Activated CD4-positive, alpha-beta T cell treated with anti-CD3 and anti-CD28 coated beads, Interleukin-2, amount 10 ng/mL, durations not matched to agents 24 days and 14 days (primary cell): ENCODE measurements at regions of chr2 and their contacts with region 1.

Region 1: DNA sequence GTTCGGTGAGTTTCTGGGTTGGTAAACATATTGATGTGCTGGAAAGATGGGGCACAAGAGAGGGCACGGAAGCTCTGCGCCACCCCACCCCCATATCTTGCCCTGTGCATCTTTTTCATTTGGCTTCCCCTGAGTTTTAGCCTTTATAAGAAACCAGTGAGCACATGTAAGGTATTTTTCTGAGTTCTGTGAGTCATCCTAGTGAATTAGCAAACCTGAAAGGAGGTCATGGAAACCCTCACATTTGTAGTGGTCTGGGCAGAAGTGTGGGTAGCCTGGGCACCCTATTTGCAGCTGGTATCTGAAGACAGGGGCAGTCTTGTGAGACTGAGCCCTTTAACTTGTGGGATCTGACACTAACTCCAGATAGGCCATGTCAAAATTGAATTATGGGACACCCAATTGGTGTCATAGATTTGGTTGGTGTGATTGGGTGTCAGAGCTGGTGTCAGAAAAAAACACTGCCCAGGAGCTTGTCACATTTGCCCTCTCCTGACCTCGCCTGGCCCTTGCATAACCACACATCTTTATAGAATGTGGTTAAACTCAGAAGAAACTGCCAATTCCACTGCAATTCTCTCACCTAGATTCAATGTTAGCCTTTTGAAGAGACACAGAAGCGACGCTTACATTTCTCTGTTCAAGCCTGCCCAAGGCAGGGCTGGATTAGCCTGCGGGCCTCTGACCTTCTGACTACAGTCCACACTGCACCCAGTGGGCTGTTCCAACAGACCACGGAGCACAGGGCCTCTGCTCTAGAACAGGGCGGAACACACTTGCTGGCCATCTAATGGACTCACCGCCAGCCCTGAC is 12.0 kb upstream of the GALM start:
- DNase-seq: peak; percentile 82
- H3K4me3 Mint-ChIP-seq: peak overlapping the region; percentile 63
- H3K27ac Mint-ChIP-seq: peak overlapping the region; percentile 87
- H3K4me1 Mint-ChIP-seq: peaks cover 58% of the 10 kb centered on the region
- H3K27me3 Mint-ChIP-seq: no peaks in the 10 kb centered on the region

Region 2: DNA sequence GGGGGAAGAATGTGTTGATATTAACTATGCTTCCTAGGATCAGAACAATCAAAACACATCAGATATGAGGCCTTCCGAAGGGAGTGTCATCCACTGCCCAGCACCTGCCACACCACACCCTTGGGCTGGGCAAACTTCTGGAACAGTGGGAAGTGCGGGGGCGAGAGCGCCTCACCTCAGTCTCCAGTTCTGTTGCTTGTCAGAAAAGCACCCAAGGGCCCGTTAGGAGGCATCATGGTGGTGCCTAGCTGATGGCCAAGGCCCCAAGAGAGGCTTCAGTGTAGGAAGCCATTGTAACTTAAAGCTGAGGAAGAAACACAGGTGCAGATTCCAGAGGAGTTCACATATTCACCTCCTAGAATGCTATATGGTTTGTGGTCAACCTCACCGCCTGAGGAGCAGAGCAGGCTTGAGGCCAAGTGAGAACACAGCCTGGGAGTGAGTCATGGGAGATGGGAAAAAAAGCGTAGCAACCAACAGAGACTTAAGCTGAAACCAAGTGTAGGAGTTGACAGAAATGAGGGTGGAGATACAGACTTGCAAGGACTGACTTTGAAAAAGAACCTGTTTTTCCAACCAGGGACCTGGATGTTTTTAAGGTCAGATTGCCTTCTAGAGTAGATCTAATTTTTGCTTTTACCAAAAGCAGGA is 191.7 kb before region 1 on chr2:
- intact Hi-C with region 1: loop called (anchors 1 kb)
- DNase-seq: peak; percentile 70
- H3K4me3 Mint-ChIP-seq: peak overlapping the region; percentile 4
- H3K27ac Mint-ChIP-seq: peak overlapping the region; percentile 43
- H3K4me1 Mint-ChIP-seq: peaks cover 8% of the 10 kb centered on the region
- H3K27me3 Mint-ChIP-seq: peaks cover 24% of the 10 kb centered on the region

Region 3: GRCh38 chr2:38610851-38611801 is 42.8 kb before region 1 on chr2:
- intact Hi-C with region 1: loop called (anchors 1 kb)
- DNase-seq: no peak
- H3K4me3 Mint-ChIP-seq: no peak overlapping the region
- H3K27ac Mint-ChIP-seq: no peak overlapping the region
- H3K4me1 Mint-ChIP-seq: peaks cover 42% of the 10 kb centered on the region
- H3K27me3 Mint-ChIP-seq: no peaks in the 10 kb centered on the region

Region 4: DNA sequence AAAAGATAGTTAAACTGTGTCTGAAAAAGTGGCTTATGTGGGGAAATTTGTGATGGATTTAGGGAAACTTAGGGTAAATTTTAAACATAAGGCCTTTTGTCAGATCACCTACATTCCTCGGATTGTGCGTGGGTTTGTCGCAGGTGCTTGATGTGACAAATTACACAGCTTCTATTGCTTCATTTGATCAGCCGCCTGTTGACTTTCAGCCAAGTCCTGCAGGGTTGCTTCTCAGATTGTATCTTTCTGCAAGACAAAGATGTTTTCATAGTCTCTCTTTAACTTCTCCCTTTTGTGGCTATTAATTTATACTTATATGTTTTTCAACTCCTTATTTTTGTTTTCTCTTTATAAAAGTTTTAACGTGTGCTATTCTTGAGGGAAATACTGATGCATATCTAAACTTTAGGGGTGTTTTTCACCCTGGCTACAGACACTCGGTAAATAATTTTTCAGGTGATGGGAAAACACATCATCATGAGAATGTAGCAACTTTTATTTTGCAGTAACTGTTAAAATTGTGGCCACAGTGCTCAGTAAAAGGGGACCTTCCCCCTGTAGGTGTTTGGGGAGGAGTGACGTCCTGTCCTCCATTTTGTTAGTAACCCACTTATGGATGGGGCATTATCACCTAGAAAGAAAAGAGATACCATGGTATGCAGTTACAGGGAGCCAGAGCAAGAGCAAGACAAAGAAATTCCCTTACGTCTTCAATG is 43.4 kb after region 1 on chr2:
- intact Hi-C with region 1: loop called (anchors 2 kb)
- DNase-seq: no peak
- H3K4me3 Mint-ChIP-seq: no peak overlapping the region
- H3K27ac Mint-ChIP-seq: peak overlapping the region; percentile 81
- H3K4me1 Mint-ChIP-seq: peaks cover 58% of the 10 kb centered on the region
- H3K27me3 Mint-ChIP-seq: no peaks in the 10 kb centered on the region

Region 5: GRCh38 chr2:38709567-38710194 is 55.8 kb after region 1 on chr2:
- intact Hi-C with region 1: loop called (anchors 2 kb)
- DNase-seq: peak; percentile 82
- H3K4me3 Mint-ChIP-seq: peak overlapping the region; percentile 72
- H3K27ac Mint-ChIP-seq: peak overlapping the region; percentile 86
- H3K4me1 Mint-ChIP-seq: peaks cover 67% of the 10 kb centered on the region
- H3K27me3 Mint-ChIP-seq: no peaks in the 10 kb centered on the region